Activated CD8-positive, alpha-beta T cell treated with anti-CD3 and anti-CD28 coated beads, Interleukin-2, amount 10 ng/mL, durations not matched to agents 7 days and 5 days (primary cell): ENCODE measurements at regions of chr2 and their contacts with region 1.

Region 1: DNA sequence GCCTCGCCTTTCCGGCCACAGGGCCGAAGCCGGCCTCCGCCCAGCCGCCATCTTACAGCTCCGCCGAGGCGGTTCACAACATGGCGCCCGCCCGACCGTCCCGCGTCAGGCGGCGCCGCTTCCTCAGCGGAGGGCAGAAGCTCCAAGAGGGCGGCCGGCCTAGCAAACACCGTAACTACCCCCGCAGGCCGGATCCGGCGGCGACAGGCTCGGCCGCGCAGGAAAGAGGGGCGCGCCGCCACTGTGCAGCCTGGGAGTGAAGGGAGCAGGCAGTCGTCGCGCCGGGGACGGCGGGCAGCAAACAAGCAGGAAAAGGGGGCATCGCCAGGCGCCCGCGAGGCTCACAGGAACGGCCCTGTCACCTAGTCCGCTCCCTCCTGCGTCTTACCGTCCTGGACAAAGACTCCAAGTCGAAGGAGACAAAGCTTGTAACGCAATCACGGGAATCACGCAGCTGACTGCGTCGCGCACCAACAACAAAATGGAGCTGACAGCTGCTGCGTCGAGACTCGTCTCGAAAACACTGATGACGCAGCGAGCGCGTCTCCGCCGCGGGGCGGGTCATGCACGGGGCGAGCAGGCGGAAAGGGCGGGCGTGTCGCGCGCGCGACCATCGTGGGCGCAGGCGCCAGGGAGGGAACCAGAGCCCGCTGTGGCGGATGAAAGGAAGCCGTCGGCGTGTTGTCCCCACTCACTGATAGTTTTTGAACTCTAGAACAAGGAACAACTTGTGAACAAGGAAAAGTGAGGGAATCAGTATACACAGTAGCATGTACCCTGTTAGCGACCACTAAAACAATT is at the start of gene CLK1:
- DNase-seq: peak; percentile 97
- ATAC-seq: peak; percentile 82
- H3K4me3 Mint-ChIP-seq: peak within 1 kb of the TSS; percentile 95
- H3K27ac Mint-ChIP-seq: peak within 1 kb of the TSS; percentile 100
- H3K4me1 Mint-ChIP-seq: peaks cover 43% of the 10 kb centered on the region
- H3K27me3 Mint-ChIP-seq: no peaks in the 10 kb centered on the region
- total RNA-seq, gene CLK1: 122 to 126 TPM

Region 2: DNA sequence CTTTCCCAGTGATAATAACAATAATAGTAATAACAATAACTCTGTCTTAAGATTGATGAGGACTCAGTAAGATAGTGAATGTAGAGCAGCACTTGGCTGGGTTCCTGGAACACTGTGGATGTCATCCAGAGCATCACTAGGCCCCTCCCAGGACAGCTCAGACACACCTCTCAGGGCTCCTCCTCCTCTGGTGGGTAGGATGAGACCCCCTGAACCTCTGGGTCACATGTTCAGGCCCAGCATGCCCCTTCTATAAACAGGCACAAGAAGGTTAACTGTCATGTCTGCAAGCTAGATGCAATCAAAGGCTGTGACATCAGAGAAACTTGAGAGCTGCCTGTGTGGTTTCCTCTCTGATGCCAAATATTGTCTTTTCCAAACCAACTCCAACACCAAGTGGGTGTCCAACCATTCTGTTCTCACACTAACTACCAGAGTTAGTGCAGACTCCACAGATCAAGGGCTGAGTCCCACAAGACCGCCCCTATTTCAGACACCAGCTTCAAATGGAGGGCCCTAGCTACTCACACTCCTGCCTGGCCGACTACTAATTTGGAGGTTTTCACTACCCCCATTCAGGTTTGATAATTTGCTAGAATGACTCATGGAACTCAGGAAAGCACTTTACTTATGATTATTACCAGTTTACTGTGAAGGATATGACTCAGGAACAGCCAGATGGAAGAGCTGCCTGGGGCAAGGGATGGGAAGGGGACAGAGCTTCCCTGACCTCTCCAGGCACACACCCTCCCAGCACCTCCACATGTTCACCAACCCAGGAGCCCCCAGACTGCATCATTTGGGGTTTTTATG is 99.0 kb before region 1 on chr2:
- CTCF ChIA-PET with region 1: no interaction called
- POLR2A ChIA-PET with region 1: interaction called, 10 read pairs
- DNase-seq: peak; percentile 27
- ATAC-seq: peak; percentile 62
- H3K4me3 Mint-ChIP-seq: no peak overlapping the region
- H3K27ac Mint-ChIP-seq: peak overlapping the region; percentile 32
- H3K4me1 Mint-ChIP-seq: peaks cover 21% of the 10 kb centered on the region
- H3K27me3 Mint-ChIP-seq: peaks cover 3% of the 10 kb centered on the region

Region 3: DNA sequence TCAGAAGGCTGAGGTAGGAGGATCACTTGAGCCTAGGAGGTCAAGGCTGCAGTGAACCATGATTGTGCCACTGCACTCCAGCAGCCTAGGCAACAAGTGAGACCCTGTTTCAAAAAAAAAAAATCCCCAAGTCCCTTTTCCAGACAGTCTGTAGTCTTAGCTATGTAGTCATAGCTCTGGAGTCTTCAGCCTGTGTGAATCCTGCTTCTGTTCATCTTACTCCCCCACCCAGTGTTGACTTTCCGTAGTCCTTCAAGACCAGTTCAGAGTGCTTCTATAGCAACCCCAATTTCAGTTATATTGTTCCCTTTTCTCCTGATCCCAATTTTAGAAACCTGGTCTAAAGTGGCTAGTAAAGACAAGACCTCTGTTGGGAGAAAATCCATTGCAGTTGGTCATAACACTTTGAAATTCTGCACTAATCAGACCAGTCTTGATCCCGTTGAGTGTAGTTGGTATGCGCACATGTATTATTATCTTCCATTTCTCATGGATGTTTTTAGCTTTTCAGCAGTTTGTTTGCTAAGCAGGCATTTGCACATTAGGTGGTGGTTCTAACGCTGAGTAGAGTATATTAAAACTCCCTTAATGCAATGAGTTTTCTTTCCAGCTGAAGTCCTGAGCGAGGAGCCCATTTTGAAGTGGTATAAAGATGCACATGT is 43.7 kb before region 1 on chr2:
- CTCF ChIA-PET with region 1: interaction called, 4 read pairs
- POLR2A ChIA-PET with region 1: interaction called, 16 read pairs
- DNase-seq: no peak
- ATAC-seq: no peak
- H3K4me3 Mint-ChIP-seq: no peak overlapping the region
- H3K27ac Mint-ChIP-seq: no peak overlapping the region
- H3K4me1 Mint-ChIP-seq: peaks cover 5% of the 10 kb centered on the region
- H3K27me3 Mint-ChIP-seq: no peaks in the 10 kb centered on the region

Region 4: DNA sequence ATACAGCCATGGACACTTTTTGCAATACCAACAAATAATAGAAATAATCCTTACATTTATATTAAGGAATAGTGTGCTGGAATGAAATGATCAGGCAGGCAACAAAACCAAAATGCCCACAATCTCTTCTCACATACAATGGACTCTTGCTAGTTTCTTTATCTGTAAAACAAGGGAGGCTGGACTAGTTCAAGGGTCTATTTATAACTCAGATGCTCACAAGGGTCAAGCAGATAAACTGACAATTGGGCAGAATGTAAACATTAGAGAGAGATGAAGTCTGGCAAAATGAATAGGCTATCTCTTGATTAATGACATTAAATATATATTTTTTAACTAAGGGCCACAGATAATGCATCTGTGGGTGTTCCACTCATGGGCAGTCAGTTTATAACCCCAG is 13.1 kb after region 1 on chr2:
- CTCF ChIA-PET with region 1: interaction called, 4 read pairs
- POLR2A ChIA-PET with region 1: interaction called, 26 read pairs
- DNase-seq: no peak
- ATAC-seq: no peak
- H3K4me3 Mint-ChIP-seq: no peak overlapping the region
- H3K27ac Mint-ChIP-seq: no peak overlapping the region
- H3K4me1 Mint-ChIP-seq: peaks cover 13% of the 10 kb centered on the region
- H3K27me3 Mint-ChIP-seq: no peaks in the 10 kb centered on the region

Region 5: DNA sequence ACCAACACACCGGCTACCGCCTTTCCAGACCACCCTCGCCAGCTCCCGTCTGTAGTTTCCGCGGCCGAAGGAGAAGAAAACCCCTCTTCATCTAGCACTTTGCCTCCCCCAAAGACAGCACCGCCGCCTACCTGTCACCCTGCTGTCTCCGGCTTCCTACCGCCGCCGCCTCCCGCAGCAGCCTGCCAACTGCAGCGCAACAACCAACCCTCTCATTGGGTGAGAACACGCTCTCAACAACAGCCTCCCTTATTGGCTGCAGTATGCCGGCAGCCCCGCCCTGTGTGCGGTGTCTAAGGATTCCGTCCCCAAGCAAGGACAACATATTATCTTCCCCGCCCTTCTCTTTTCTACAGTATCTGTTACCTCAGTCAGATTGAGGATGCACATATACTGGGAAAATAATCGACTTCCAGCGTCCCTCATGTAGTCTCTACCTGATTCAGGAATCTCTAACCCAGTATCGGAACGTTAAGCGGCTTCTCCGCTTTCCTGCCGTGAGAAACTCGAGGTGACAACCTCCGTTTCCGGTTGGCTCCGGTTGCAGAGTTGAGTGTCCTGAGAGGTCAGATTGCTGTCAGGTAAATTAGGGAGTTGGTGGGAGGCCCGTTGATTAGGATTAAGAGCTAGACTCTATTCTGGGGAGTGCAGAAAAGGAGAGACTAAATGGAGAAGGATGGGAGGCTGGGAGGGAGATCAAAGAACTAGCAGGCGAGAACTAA is 207.3 kb after region 1 on chr2 and contains the starts of genes HYCC2 and NDUFB3:
- CTCF ChIA-PET with region 1: interaction called, 7 read pairs
- POLR2A ChIA-PET with region 1: interaction called, 16 read pairs
- DNase-seq: peak; percentile 96
- ATAC-seq: peak; percentile 97
- H3K4me3 Mint-ChIP-seq: peak within 1 kb of the TSS; percentile 89
- H3K27ac Mint-ChIP-seq: peak within 1 kb of the TSS; percentile 88
- H3K4me1 Mint-ChIP-seq: peaks cover 46% of the 10 kb centered on the region
- H3K27me3 Mint-ChIP-seq: no peaks in the 10 kb centered on the region
- total RNA-seq, gene HYCC2: 35.9 to 40.2 TPM
- total RNA-seq, gene NDUFB3: 167 to 173 TPM

Region 6: DNA sequence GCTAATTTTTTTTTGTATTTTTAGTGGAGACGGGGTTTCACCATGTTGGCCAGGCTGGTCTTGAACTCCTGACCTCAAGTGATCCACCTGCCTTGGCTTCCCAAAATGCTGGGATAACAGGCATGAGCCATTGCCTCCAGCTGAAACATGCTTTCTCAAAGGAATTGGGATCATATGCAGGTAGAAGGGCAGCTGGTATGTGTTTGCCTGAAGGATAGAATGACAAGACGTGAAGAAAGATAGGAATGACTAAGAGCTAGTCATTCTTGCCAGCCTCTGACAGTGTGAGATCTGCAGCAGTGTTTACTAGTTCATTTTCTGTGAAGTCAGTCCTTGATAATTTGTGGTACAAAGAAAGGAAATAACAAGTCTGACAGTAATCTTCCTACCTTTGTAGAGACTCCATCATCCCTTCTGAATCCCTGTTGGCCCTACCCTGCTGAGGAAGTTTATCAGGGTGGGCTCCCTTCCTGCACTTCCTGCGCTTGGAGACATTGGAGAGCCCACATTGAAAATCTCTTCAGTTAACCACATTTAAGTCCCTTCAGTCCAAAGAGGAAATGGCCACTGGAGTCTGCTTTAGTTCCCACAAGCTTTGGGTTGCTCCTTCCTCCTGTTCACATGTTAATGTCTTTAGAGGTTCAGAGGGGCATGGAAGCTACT is 266.3 kb after region 1 on chr2:
- CTCF ChIA-PET with region 1: interaction called, 3 read pairs
- POLR2A ChIA-PET with region 1: interaction called, 12 read pairs
- DNase-seq: peak; percentile 43
- ATAC-seq: peak; percentile 48
- H3K4me3 Mint-ChIP-seq: peak overlapping the region; percentile 62
- H3K27ac Mint-ChIP-seq: peak overlapping the region; percentile 85
- H3K4me1 Mint-ChIP-seq: peaks cover 72% of the 10 kb centered on the region
- H3K27me3 Mint-ChIP-seq: no peaks in the 10 kb centered on the region

Region 7: DNA sequence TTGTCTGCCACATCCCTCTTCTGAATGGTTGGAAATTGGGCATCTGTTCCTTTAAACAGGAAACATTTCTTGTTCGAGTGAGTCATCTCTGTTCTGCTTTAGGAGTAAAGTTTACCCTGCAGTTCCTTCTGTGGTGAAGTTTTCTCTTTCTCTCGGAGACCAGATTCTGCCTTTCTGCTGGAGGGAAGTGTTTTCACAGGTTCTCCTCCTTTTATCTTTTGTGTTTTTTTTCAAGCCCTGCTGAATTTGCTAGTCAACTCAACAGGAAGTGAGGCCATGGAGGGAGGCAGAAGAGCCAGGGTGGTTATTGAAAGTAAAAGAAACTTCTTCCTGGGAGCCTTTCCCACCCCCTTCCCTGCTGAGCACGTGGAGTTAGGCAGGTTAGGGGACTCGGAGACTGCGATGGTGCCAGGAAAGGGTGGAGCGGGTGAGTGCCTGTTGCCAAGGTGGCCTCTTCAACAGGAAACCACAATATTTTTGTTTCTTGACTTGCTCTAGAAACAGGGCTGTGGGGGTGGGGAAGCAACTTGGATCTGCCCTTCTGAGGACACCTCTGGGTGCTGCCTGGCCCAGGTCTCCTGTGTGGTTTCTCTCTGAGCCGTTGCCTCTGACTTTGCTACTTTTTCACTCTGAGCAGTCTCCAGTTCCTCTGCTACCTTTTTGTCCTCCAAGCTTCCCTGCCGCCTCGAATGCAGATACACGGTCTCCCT is 393.7 kb after region 1 on chr2:
- CTCF ChIA-PET with region 1: no interaction called
- POLR2A ChIA-PET with region 1: interaction called, 11 read pairs
- DNase-seq: peak; percentile 98
- ATAC-seq: peak; percentile 71
- H3K4me3 Mint-ChIP-seq: peak overlapping the region; percentile 81
- H3K27ac Mint-ChIP-seq: peak overlapping the region; percentile 94
- H3K4me1 Mint-ChIP-seq: peaks cover 74% of the 10 kb centered on the region
- H3K27me3 Mint-ChIP-seq: no peaks in the 10 kb centered on the region